PC-3 (cell line): ENCODE measurements at regions of chr15 and their contacts with region 1.

Region 1: GRCh38 chr15:68930268-68931022 is at the start of gene SPESP1:
- DNase-seq: no peak
- ATAC-seq: no peak
- H3K4me3 ChIP-seq: no peak within 1 kb of the TSS
- H3K27ac ChIP-seq: no peak within 1 kb of the TSS
- H3K4me1 ChIP-seq: no peaks in the 10 kb centered on the region
- H3K27me3 ChIP-seq: no peaks in the 10 kb centered on the region
- CTCF ChIP-seq: no peak
- total RNA-seq, gene SPESP1: not detected in 2 replicates

Region 2: GRCh38 chr15:69031013-69032001 is 100.9 kb after region 1 on chr15:
- CTCF ChIA-PET with region 1: interaction called, 3 read pairs
- POLR2A ChIA-PET with region 1: no interaction called
- intact Hi-C with region 1: loop called (anchors 10 kb)
- DNase-seq: peak; percentile 50
- ATAC-seq: peak; percentile 23
- H3K4me3 ChIP-seq: peak overlapping the region; percentile 30; the same call in 1 of the 2 replicates
- H3K27ac ChIP-seq: peak overlapping the region; percentile 99
- H3K4me1 ChIP-seq: peaks cover 52% of the 10 kb centered on the region
- H3K27me3 ChIP-seq: no peaks in the 10 kb centered on the region
- CTCF ChIP-seq: peak; percentile 58

Region 3: DNA sequence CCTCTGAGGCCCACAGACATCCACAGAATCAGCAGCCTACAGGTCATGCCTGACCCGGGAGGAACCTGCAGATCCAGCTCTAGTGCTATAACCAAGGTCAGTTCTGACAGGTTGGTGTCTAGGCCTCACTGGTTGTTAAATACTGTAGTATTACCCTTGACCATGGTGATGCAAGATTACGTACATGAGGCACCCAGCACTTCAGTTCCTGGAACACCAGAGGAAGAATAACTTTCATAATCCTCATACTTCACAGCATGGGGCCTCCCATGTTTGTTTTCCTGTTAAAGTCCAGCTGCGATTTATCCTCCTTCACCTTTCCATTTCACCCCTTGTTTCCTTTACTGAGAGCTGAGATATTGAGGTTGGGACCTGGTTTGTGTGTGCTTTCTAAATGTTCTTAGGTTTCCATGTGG is 195.6 kb after region 1 on chr15:
- CTCF ChIA-PET with region 1: no interaction called
- POLR2A ChIA-PET with region 1: no interaction called
- intact Hi-C with region 1: no loop called
- DNase-seq: no peak
- ATAC-seq: no peak
- H3K4me3 ChIP-seq: no peak overlapping the region
- H3K27ac ChIP-seq: no peak overlapping the region
- H3K4me1 ChIP-seq: peaks cover 12% of the 10 kb centered on the region
- H3K27me3 ChIP-seq: no peaks in the 10 kb centered on the region
- CTCF ChIP-seq: no peak